Posterior vena cava (tissue), 2 donors: ENCODE measurements at regions of chr12 and their contacts with region 1.

Region 1: DNA sequence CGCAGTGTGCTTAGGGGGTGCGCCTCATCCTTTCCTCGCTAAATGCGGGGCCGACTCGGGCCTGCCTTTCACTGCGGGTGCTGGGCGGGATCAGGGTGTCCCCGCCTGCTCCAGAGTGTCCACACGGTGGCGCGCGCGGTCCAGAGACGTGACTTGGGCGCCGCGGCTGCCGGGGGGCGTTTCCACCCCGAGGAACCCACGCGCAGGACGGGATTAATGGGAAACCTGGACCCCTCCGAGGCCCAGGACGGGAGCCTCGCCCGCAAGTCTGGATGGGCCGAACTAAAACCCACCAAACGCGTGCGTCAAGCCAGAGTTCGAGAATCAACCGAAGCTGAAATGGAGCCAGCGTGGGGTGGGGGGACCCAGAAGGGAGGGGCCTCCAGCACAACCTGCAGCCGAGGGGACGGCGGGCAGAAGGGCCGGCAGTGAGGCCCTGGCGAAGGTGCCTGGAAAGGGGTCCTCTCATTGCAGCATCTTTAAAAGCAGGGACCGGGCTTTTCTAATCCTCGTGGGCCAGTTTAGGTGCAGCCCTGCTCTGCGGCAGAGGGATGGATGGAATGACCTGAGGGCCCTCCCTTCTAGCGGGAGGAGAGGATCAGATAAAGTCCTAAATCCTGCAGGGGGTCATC is 93.3 kb downstream of the NINJ2 start:
- DNase-seq: peak; percentile 97

Region 2: GRCh38 chr12:630656-631632 is 61.0 kb after region 1 on chr12:
- intact Hi-C with region 1: no loop called
- DNase-seq: peak; percentile 94

Region 3: GRCh38 chr12:949453-950191 is 379.7 kb after region 1 on chr12 and contains the start of gene RAD52:
- intact Hi-C with region 1: loop called in 1 of 2 experiments (anchors 10 kb)
- DNase-seq: peak; percentile 100
- total RNA-seq, gene RAD52: 7.9 to 10.5 TPM